Naive thymus-derived CD4-positive, alpha-beta T cell (primary cell): ENCODE measurements at regions of chr4 and their contacts with region 1.

Region 1: DNA sequence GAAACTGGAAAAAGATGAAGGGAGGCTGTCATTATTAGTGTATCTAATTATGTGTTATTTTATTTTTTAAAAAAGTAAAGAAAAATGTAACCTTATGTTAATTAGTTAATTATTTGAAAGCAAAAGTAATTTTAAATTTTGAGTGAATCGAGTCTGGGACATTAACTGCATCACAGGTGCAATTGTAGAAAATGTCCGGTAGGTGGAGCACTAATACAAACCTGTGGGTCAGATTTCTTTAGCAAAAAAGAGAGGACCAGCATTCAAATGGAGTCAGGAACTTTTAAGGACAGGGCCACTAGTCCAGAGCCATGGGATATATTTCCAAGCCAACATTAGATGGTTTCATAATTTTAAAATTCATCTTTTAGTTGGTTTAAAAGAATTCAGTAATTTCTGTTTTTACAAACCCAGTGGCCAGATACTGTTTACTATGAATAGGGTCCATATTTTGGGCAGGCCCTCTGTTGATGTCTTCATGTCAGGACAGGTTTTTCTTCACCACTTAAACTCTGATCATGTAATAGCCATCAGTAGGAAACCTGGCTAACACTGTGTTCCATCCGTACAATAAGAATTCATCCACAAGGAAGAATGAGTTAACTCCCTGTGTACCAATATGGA is 27.2 kb downstream of the BST1 start:
- DNase-seq: peak in 7 of 9 donors; percentile 26 to 62 (median 54)
- ATAC-seq: peak; percentile 78
- H3K4me3 ChIP-seq: no peak overlapping the region
- H3K4me3 Mint-ChIP-seq: no peak overlapping the region
- H3K27ac ChIP-seq: no peak overlapping the region
- H3K27ac Mint-ChIP-seq: no peak overlapping the region
- H3K4me1 ChIP-seq: no peaks in the 10 kb centered on the region
- H3K4me1 Mint-ChIP-seq: peaks cover 7 to 30% (median 18%) of the 10 kb centered on the region in 7 donors
- H3K27me3 ChIP-seq: no peaks in the 10 kb centered on the region
- H3K27me3 Mint-ChIP-seq: no peaks in the 10 kb centered on the region

Region 2: GRCh38 chr4:15765910-15766697 is 36.1 kb after region 1 on chr4:
- CTCF ChIA-PET with region 1: interaction called, 4 read pairs
- POLR2A ChIA-PET with region 1: interaction called, 3 read pairs
- intact Hi-C with region 1: loop called in 1 of 2 experiments (anchors 1 kb)
- DNase-seq: peak in 7 of 9 donors; percentile 58 to 83 (median 79)
- ATAC-seq: peak; percentile 82
- H3K4me3 ChIP-seq: no peak overlapping the region
- H3K4me3 Mint-ChIP-seq: peak overlapping the region; percentile 50 to 83 (median 72)
- H3K27ac ChIP-seq: peak overlapping the region; percentile 32
- H3K27ac Mint-ChIP-seq: peak overlapping the region; percentile 37 to 92 (median 86)
- H3K4me1 ChIP-seq: peaks cover 27 to 43% of the 10 kb centered on the region in 2 donors
- H3K4me1 Mint-ChIP-seq: peaks cover 28 to 70% (median 59%) of the 10 kb centered on the region in 7 donors
- H3K27me3 ChIP-seq: no peaks in the 10 kb centered on the region
- H3K27me3 Mint-ChIP-seq: no peaks in the 10 kb centered on the region

Region 3: GRCh38 chr4:15805583-15806517 is 75.8 kb after region 1 on chr4:
- CTCF ChIA-PET with region 1: interaction called, 3 read pairs
- POLR2A ChIA-PET with region 1: no interaction called
- intact Hi-C with region 1: loop called (anchors 1 kb)
- DNase-seq: peak in 7 of 9 donors; percentile 37 to 64 (median 52)
- ATAC-seq: peak; percentile 80
- H3K4me3 ChIP-seq: no peak overlapping the region
- H3K4me3 Mint-ChIP-seq: no peak overlapping the region
- H3K27ac ChIP-seq: no peak overlapping the region
- H3K27ac Mint-ChIP-seq: peak overlapping the region in 3 of 9 donors; percentile 21 to 78 (median 60)
- H3K4me1 ChIP-seq: peaks cover 0 to 4% of the 10 kb centered on the region in 2 donors
- H3K4me1 Mint-ChIP-seq: peaks cover 26 to 76% (median 43%) of the 10 kb centered on the region in 7 donors
- H3K27me3 ChIP-seq: no peaks in the 10 kb centered on the region
- H3K27me3 Mint-ChIP-seq: no peaks in the 10 kb centered on the region

Region 4: GRCh38 chr4:15882675-15883086 is 152.7 kb after region 1 on chr4:
- CTCF ChIA-PET with region 1: interaction called, 6 read pairs
- POLR2A ChIA-PET with region 1: no interaction called
- intact Hi-C with region 1: loop called (anchors 1 kb)
- DNase-seq: peak in 7 of 9 donors; percentile 22 to 52 (median 41)
- ATAC-seq: peak; percentile 89
- H3K4me3 ChIP-seq: no peak overlapping the region
- H3K4me3 Mint-ChIP-seq: no peak overlapping the region
- H3K27ac ChIP-seq: no peak overlapping the region
- H3K27ac Mint-ChIP-seq: peak overlapping the region in 1 of 9 donors; percentile 2
- H3K4me1 ChIP-seq: no peaks in the 10 kb centered on the region
- H3K4me1 Mint-ChIP-seq: peaks cover 0 to 13% (median 0%) of the 10 kb centered on the region in 7 donors
- H3K27me3 ChIP-seq: no peaks in the 10 kb centered on the region
- H3K27me3 Mint-ChIP-seq: peaks cover 0 to 20% (median 4%) of the 10 kb centered on the region in 5 donors

Region 5: GRCh38 chr4:16264798-16265197 is 534.8 kb after region 1 on chr4:
- CTCF ChIA-PET with region 1: no interaction called
- POLR2A ChIA-PET with region 1: no interaction called
- intact Hi-C with region 1: loop called in 1 of 2 experiments (anchors 1 kb)
- DNase-seq: peak in 7 of 9 donors; percentile 14 to 59 (median 34)
- ATAC-seq: peak; percentile 40
- H3K4me3 ChIP-seq: no peak overlapping the region
- H3K4me3 Mint-ChIP-seq: no peak overlapping the region
- H3K27ac ChIP-seq: no peak overlapping the region
- H3K27ac Mint-ChIP-seq: no peak overlapping the region
- H3K4me1 ChIP-seq: peaks cover 0 to 3% of the 10 kb centered on the region in 2 donors
- H3K4me1 Mint-ChIP-seq: peaks cover 0 to 11% (median 4%) of the 10 kb centered on the region in 7 donors
- H3K27me3 ChIP-seq: no peaks in the 10 kb centered on the region
- H3K27me3 Mint-ChIP-seq: peaks cover 0 to 2% (median 0%) of the 10 kb centered on the region in 5 donors